ENCODE measurements at regions of chr5 and their contacts with region 1.

Region 1: DNA sequence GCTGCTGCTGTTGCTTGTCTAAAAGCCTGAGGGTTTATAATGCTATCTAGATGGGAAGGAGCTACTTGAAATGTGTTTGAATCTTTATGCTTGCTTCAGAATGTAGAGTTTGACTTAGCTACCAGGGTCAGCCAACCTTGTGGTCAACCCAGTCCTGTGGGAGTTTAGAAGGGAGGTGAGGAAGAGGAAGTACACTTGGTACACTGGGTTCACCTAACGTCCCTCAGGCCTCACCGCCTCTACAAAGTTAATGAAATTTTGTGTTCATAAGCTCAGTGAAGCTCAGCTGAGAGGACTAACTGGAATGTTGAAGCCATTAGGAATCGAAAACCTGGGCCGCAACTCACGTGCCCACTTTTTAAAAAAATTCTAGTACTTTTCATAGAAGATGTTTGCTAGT is 10.7 kb downstream of the IQGAP2 start:
- DNase-seq: no peak
- ATAC-seq: no peak
- H3K4me3 ChIP-seq: no peak overlapping the region
- H3K27ac ChIP-seq: no peak overlapping the region
- H3K4me1 ChIP-seq: peaks cover 34% of the 10 kb centered on the region
- H3K27me3 ChIP-seq: no peaks in the 10 kb centered on the region
- CTCF ChIP-seq: no peak
- POLR2A ChIP-seq: no peak

Region 2: GRCh38 chr5:76223696-76224095 is 190.1 kb before region 1 on chr5:
- intact Hi-C with region 1: no loop called
- DNase-seq: no peak
- ATAC-seq: no peak
- H3K4me3 ChIP-seq: no peak overlapping the region
- H3K27ac ChIP-seq: no peak overlapping the region
- H3K4me1 ChIP-seq: no peaks in the 10 kb centered on the region
- H3K27me3 ChIP-seq: no peaks in the 10 kb centered on the region
- CTCF ChIP-seq: no peak
- POLR2A ChIP-seq: no peak

Region 3: DNA sequence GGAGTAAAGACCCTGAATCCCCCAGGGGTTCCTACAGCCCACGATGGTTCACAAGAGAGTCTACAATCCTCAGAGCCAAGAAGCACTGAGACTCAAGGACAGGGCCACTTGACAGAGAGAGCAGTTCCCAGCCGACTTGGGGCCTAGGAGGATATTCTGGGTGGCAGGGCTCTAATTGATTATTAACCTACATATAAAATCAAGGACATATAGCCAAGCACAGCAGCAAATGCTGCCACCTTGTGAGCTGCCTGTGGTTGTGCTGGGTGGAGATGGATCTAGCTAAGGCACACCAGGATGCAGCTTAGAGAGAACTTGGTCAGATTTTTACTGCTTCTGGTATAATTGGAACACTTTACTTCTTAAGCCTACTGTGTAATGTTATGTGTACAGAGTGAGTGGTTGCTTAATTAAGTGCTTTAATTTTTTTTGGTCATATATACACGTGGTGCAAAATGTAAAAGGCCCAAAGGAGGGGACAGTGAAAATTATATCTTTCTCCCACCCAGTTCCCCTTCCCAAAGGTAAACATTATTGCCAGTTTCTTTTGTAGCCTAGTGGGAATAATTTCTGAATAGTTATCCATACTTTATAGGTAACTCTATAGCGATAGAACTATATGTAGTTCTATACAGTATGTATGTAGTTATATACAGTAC is 130.7 kb after region 1 on chr5:
- intact Hi-C with region 1: loop called (anchors 10 kb)
- DNase-seq: peak; percentile 73 to 87 (median 82)
- ATAC-seq: peak; percentile 81
- H3K4me3 ChIP-seq: no peak overlapping the region
- H3K27ac ChIP-seq: peak overlapping the region; percentile 16 to 66 (median 62)
- H3K4me1 ChIP-seq: peaks cover 62% of the 10 kb centered on the region
- H3K27me3 ChIP-seq: no peaks in the 10 kb centered on the region
- CTCF ChIP-seq: peak; percentile 62 to 93 (median 88)
- POLR2A ChIP-seq: peak in 1 of 3 donors; percentile 6

Measured in body of pancreas (tissue), 4 donors.